ENCODE measurements at regions of chr6 and their contacts with region 1.

Region 1: GRCh38 chr6:47512872-47513271 is 35.3 kb downstream of the CD2AP start:
- DNase-seq: no peak
- ATAC-seq: no peak
- H3K4me3 Mint-ChIP-seq: no peak overlapping the region
- H3K27ac Mint-ChIP-seq: no peak overlapping the region
- H3K4me1 Mint-ChIP-seq: peaks cover 31% of the 10 kb centered on the region
- H3K27me3 Mint-ChIP-seq: no peaks in the 10 kb centered on the region

Region 2: DNA sequence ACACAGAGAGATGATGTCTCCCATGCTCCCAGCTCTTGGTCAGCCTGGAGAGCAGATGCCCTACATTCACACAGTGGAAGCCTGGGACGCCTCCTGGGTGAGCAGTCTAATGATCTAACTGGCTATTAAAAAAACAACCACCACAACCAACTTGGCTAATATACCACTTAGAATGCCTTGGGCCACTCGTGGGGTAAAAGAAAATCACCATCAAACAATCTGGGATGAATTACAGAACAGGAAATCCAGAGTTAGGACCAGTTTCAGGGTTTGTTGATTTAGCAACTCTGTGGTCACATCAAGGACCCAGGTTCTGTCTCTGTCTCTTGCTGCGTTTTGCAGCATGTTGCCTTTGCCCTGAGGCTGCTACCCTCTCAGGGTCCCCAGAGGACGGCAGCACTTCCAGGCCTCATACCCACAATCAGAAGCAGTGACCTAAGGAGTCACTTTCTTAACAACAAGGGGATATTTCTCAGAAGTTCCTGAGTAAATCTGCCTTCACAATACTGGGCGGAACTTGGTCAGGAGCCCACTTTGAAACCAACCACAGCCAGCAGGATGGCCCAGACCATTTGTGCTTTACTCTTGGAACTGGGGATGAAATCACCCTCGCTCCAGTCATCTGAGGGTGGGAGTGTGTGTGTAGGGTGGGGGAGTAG is 1616.0 kb before region 1 on chr6:
- CTCF ChIA-PET with region 1: no interaction called
- POLR2A ChIA-PET with region 1: no interaction called
- intact Hi-C with region 1: no loop called
- DNase-seq: no peak
- ATAC-seq: no peak
- H3K4me3 Mint-ChIP-seq: no peak overlapping the region
- H3K27ac Mint-ChIP-seq: no peak overlapping the region
- H3K4me1 Mint-ChIP-seq: peaks cover 7% of the 10 kb centered on the region
- H3K27me3 Mint-ChIP-seq: peaks cover 2% of the 10 kb centered on the region

Region 3: GRCh38 chr6:47496935-47497579 is 15.8 kb before region 1 on chr6:
- CTCF ChIA-PET with region 1: no interaction called
- POLR2A ChIA-PET with region 1: no interaction called
- intact Hi-C with region 1: loop called in 1 of 2 experiments (anchors 1 kb)
- DNase-seq: no peak
- ATAC-seq: no peak
- H3K4me3 Mint-ChIP-seq: no peak overlapping the region
- H3K27ac Mint-ChIP-seq: no peak overlapping the region
- H3K4me1 Mint-ChIP-seq: peaks cover 69% of the 10 kb centered on the region
- H3K27me3 Mint-ChIP-seq: no peaks in the 10 kb centered on the region

Measured in activated CD4-positive, alpha-beta T cell treated with anti-CD3 and anti-CD28 coated beads for 36 hours (primary cell).